ENCODE measurements at regions of chr2 and their contacts with region 1.

Region 1: DNA sequence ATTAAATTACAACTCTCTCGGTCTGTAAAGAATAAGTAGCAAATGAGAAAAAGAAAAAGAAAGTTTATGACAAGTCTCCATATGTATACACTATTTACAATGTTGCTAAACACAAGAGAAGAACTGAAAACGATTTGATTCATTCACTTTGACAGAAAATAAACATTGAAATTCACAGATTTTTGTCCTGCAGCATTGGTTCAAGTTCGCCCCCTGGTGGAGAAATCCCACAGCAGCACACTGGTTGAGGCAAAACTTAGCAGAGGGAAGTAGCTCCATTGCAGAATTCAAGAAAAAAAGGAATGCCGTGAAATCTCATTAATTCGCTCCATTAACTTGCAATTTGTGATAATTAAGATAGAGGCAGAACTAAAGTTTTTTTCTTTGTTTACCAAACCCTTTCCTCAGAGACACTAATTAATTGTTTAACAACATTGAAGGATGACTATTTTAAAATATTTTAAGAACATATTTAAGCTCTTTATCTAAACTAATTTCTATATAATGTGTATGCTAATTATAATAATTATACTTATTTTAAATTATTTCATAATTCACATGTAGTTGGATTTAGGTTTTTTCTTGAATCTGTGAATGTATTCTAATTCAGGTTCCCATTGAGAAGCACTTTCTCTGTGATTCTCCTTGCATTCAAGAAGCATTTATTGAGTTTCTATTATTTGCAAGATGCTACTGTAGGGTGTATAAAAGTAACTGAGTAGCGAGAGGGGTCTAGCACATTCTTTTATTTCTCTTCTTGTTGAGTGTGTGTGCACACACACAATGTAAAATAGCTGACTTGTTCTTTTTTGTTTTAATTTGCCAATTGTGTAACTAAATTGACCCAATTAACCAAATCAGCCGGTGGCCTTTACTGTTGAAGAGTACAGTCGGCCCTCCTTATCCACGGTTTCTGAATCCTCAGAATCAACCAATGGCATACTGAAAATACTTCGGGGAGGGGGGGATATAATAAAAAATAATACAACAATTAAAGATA is 74.1 kb downstream of the COL4A3 start:
- DNase-seq: peak; percentile 46 to 65
- H3K4me3 ChIP-seq: no peak overlapping the region
- H3K27ac ChIP-seq: no peak overlapping the region
- H3K4me1 ChIP-seq: no peaks in the 10 kb centered on the region
- H3K27me3 ChIP-seq: no peaks in the 10 kb centered on the region
- CTCF ChIP-seq: peak; percentile 97

Region 2: GRCh38 chr2:227132986-227133385 is 105.6 kb before region 1 on chr2:
- CTCF ChIA-PET with region 1: interaction called, 5 read pairs
- POLR2A ChIA-PET with region 1: no interaction called
- intact Hi-C with region 1: loop called (anchors 1 kb)
- DNase-seq: no peak
- H3K4me3 ChIP-seq: no peak overlapping the region
- H3K27ac ChIP-seq: no peak overlapping the region
- H3K4me1 ChIP-seq: no peaks in the 10 kb centered on the region
- H3K27me3 ChIP-seq: no peaks in the 10 kb centered on the region
- CTCF ChIP-seq: no peak

Region 3: DNA sequence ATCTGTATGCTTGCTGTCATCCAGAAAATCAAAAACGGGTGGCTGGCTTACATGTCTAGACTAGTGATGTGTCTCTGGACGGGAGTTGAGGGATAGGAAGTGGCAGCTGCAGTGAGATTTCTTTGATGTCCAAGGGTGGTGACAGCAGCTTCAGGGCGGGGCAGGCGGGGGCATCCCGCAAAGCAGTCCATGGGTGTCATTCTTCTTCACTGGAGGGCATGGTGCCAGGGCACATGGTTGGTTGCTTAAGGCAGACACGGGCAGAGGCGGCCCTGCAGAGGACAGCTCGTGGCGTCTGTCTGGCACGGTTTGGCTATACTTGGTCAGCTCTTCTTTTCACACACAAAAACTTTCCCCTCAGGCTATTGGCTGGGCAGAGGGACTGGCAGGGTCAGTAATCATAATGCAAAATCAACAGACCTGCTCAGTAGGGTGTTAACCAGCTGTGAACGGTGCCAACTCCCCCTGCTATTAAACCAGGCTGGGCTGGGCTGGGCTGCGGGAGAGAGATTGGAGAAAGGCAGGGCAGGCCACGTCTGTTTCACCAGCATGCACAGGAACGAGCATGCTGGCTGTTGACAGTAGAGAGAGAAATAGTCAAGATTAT is 10.4 kb before region 1 on chr2:
- CTCF ChIA-PET with region 1: interaction called, 12 read pairs
- POLR2A ChIA-PET with region 1: interaction called, 4 read pairs
- intact Hi-C with region 1: no loop called
- DNase-seq: peak; percentile 57 to 76
- H3K4me3 ChIP-seq: peak overlapping the region; percentile 0; the same call in 1 of the 2 replicates
- H3K27ac ChIP-seq: no peak overlapping the region
- H3K4me1 ChIP-seq: peaks cover 18% of the 10 kb centered on the region
- H3K27me3 ChIP-seq: no peaks in the 10 kb centered on the region
- CTCF ChIP-seq: no peak

Region 4: GRCh38 chr2:227339098-227339599 is 100.6 kb after region 1 on chr2:
- CTCF ChIA-PET with region 1: interaction called, 10 read pairs
- POLR2A ChIA-PET with region 1: no interaction called
- intact Hi-C with region 1: no loop called
- DNase-seq: no peak
- H3K4me3 ChIP-seq: no peak overlapping the region
- H3K27ac ChIP-seq: no peak overlapping the region
- H3K4me1 ChIP-seq: no peaks in the 10 kb centered on the region
- H3K27me3 ChIP-seq: no peaks in the 10 kb centered on the region
- CTCF ChIP-seq: no peak

Region 5: DNA sequence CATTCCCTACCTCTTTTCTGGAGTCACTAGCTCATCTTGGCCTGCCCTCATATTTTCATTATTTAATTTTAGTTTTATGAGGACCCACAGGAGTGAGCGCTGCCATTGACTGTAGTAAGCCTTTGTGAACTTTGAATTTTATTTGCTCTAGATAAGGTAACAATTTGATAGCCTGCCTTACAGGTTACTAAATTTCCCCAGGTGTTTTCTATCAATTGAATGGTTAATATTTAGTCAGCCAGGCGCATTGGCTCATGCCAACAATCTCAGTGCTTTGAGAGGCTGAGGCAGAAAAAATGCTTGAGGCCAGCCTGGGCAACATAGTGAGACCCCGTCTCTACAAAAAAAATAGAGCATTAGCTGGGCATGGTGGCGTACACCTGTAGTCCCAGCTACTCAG is 683.1 kb after region 1 on chr2:
- CTCF ChIA-PET with region 1: interaction called, 18 read pairs
- POLR2A ChIA-PET with region 1: no interaction called
- intact Hi-C with region 1: no loop called
- DNase-seq: no peak
- H3K4me3 ChIP-seq: no peak overlapping the region
- H3K27ac ChIP-seq: no peak overlapping the region
- H3K4me1 ChIP-seq: no peaks in the 10 kb centered on the region
- H3K27me3 ChIP-seq: no peaks in the 10 kb centered on the region
- CTCF ChIP-seq: no peak

Measured in PC-9 (cell line).